Breast epithelium (tissue), 4 donors: ENCODE measurements at regions of chr5 and their contacts with region 1.

Region 1: DNA sequence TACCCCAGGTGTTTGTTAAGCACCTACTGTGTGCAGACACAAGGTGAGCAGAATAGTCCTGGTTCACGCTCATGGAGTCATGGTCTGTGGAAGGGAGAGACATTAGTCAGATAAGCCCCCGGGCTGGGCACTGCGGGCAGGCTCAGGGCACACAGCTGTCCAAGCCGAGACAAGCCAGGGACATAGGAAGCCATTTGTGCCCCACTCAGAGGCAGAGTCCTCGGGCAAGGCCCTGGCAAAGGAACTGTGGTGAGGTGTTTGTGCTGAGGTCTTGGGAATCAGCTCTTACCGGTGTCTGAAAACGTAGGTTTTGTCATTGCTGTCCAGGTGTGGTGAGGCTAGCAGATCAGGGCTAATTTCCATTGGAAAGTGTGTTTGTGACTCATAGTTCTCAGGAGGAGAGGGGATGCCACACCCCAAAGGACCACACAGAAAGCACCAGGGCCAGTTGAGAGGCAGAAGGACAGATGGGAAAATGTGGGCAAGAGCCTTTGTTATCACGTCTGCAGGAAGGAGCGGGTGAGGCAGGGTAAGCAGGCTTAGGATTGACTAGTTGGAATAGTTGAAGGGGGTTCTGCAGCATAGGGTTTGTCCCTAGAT is 46.1 kb upstream of the NEURL1B start:
- DNase-seq: no peak
- H3K4me3 ChIP-seq: no peak overlapping the region
- H3K27ac ChIP-seq: no peak overlapping the region
- H3K4me1 ChIP-seq: peaks cover 0 to 7% of the 10 kb centered on the region in 2 donors
- H3K27me3 ChIP-seq: no peaks in the 10 kb centered on the region
- CTCF ChIP-seq: no peak
- POLR2A ChIP-seq: no peak

Region 2: DNA sequence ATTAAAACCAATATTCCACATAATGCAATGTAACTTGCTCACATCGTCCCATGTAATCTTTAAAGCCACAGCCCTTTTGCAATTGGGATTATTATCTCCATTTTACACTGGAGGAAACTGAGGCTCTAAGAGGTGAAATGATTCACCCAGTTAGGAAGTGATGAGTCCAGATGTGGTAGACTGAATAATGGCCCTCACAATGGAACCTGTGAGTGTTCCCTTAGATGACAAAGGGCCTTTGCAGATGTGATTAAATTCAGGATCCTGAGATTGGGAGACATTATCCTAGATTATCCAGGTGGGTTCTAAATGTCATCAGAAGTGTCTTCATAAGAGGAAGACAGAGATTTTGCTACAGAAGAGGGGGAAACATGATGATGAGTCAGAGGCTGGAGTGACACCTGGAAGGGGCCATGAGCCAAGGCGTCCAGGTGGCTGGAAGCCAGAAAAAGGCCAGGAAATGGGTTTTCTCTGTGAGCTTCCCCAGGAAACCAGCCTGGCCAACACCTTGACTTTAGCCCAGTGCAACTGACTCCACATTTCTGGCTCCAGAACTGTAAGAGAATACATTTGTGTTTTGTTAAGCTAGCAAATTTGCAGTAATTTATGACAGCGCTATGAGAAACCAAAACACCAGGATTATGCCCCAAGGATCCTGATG is 1952.1 kb before region 1 on chr5:
- intact Hi-C with region 1: loop called (anchors 5 kb)
- DNase-seq: no peak
- H3K4me3 ChIP-seq: no peak overlapping the region
- H3K27ac ChIP-seq: no peak overlapping the region
- H3K4me1 ChIP-seq: no peaks in the 10 kb centered on the region
- H3K27me3 ChIP-seq: peaks cover 0 to 4% of the 10 kb centered on the region in 2 donors
- CTCF ChIP-seq: no peak
- POLR2A ChIP-seq: no peak